ENCODE measurements at regions of chr3 and their contacts with region 1.

Region 1: DNA sequence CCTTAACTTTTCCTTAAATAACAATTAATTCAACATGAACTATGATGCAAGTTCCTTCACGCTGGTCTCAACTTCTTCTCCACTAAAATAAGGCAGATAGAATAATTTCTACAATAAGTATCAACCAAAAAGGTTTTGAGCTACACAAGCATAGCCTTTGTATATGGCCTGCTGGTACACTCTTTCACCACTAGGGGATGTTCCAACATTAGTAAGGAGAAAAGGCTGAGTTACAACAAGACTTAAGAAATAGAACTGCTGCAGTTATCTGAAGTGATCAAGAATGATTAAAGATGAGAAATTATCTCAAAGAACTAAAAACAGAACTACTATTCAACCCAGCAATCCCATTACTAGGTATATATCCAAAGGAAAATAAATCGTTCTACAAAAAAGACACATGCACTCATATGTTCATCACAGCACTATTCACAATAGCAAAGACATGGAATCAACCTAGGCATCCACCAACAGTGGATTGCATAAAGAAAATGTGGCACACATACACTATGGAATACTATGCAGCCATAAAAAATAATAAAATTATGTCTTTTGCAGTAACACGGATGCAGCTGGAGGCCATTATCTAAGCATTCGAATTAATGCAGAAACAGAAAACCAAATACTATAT is 14.4 kb downstream of the ATP13A3 start:
- DNase-seq: no peak
- ATAC-seq: peak; percentile 85 to 90
- H3K4me3 ChIP-seq: no peak overlapping the region
- H3K27ac ChIP-seq: no peak overlapping the region
- H3K4me1 ChIP-seq: peaks cover 4% of the 10 kb centered on the region
- H3K27me3 ChIP-seq: no peaks in the 10 kb centered on the region
- CTCF ChIP-seq: peak; percentile 93

Region 2: DNA sequence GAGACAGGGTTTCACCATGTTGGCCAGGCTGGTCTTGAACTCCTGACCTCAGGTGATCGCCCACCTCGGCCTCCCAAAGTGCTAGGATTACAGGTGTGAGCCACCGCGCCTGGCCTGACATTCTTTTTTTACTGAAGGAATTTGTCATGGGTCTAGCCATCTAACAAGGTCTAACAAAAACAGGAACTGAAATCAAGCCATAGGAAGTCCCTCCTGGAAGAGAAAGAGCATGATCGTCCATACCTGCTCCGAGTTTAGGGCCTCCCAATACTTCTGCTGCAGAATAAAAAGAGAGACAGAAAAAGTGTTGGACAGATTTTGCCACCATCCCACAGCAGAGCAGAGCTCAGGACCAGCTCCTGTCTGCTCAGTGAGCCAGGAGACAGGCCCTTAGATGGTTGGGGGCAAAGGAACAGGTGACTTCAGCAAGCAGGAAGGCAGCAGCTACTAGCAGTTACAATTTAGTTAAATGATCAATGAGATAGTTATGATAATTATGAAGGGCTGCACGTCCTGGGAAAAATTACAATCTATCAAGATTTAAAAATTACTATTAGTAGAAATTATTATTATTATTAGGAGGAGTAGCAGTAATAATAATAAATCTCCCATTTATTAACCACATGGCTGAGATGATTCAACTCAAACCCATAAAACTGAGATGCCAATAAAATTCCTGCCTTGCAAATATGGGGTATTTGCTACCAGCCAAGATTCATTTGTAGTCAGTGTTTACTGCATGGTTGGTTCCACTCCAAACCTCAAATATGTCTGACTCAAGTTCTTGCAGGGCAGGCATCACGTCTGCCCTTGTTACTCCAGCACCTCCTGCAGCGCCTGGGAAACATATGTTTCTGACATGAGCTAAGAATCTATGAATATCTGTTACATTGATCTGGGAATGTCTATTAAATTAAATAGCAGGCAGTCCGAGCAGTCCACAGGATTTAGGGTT is 120.7 kb after region 1 on chr3:
- intact Hi-C with region 1: loop called (anchors 10 kb)
- DNase-seq: no peak
- ATAC-seq: peak; percentile 59 to 68
- H3K4me3 ChIP-seq: no peak overlapping the region
- H3K27ac ChIP-seq: no peak overlapping the region
- H3K4me1 ChIP-seq: peaks cover 8% of the 10 kb centered on the region
- H3K27me3 ChIP-seq: no peaks in the 10 kb centered on the region
- CTCF ChIP-seq: no peak